ENCODE measurements at regions of chr2 and their contacts with region 1.

Region 1: DNA sequence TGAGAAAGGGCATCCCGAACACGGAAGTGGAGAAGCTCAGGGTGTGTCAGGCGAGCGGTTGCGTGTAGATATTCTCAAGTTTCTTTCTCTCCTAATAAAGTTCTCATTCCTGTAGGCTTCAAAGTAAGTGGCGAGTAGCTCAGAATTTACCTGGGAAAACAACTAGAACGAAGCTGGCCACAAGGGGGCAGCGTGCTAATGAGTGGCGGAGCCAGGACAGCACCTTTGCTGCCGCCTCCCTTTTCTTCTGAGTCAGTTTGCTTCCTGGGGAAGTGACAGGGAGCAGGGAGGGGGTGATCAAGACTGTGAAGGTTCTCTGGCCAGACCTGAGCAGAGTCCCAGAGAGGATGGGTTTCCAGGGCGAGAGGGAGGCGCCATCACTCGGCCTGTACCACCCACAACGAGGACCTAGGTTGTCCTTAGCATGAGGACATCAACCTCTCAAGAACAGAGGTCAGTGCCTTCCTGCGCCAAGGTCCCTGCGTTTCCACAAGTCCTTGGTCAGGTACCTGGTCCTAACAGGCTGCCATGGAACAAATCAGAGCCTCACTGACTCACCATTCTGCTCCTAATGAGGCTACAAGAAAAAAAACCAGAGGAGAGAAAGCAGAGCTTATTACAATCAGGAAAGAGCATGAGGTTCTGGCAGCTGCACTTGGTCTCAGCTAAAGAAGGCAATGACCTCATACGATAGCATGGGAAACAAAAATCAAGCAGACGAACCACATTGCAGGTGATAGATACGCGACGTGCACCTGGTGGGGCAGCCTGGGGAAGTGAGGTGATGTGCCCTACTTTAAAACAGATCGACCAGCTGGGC is 98.6 kb downstream of the PLB1 start:
- DNase-seq: peak; percentile 76 to 96
- H3K4me3 ChIP-seq: peak overlapping the region; percentile 15 to 18
- H3K27ac ChIP-seq: peak overlapping the region; percentile 89 to 93
- H3K4me1 ChIP-seq: peaks cover 0 to 39% of the 10 kb centered on the region in 2 donors
- H3K27me3 ChIP-seq: no peaks in the 10 kb centered on the region
- CTCF ChIP-seq: peak; percentile 77 to 89 (median 86)

Region 2: DNA sequence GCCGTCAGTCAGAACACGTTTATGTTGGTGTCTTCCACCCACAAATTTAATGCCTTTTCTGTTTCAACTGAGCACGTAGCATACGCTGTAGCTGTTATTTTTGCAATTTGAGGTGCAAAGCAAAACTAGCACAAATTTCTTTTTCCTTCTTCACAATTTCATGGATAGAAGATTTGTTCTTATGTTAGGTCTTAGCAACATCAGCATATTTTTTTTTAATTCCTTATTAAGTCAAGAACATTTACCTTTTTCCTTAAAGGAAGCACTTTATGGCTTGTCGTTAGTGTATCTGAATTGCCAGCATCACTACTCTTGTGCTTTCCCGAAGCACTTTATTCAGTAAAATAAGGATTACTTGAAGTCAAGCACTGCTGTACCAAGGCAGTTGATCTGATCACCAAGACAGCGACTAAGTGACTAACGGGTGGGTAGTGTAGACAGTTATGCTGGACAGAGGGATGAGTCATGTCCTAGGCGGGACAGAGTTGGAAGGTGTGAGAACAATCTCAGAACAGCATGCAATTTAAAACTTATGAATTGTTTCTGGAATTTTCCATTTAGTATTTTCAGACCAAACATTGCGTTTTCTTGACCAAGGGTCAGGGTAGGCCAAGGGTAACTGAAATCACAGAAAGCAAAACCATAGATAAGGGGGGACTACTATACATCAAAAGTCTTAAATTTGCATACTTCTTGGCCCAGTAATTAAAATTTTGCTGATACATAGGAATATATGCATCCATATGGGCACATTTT is 690.7 kb before region 1 on chr2:
- intact Hi-C with region 1: no loop called
- DNase-seq: no peak
- H3K4me3 ChIP-seq: no peak overlapping the region
- H3K27ac ChIP-seq: no peak overlapping the region
- H3K4me1 ChIP-seq: no peaks in the 10 kb centered on the region
- H3K27me3 ChIP-seq: no peaks in the 10 kb centered on the region
- CTCF ChIP-seq: no peak

Region 3: GRCh38 chr2:28566521-28567041 is 27.9 kb before region 1 on chr2:
- intact Hi-C with region 1: loop called (anchors 1 kb)
- DNase-seq: peak; percentile 44 to 90
- H3K4me3 ChIP-seq: peak overlapping the region; percentile 50 to 71
- H3K27ac ChIP-seq: peak overlapping the region; percentile 32 to 39
- H3K4me1 ChIP-seq: peaks cover 0 to 5% of the 10 kb centered on the region in 2 donors
- H3K27me3 ChIP-seq: no peaks in the 10 kb centered on the region
- CTCF ChIP-seq: peak; percentile 100

Region 4: DNA sequence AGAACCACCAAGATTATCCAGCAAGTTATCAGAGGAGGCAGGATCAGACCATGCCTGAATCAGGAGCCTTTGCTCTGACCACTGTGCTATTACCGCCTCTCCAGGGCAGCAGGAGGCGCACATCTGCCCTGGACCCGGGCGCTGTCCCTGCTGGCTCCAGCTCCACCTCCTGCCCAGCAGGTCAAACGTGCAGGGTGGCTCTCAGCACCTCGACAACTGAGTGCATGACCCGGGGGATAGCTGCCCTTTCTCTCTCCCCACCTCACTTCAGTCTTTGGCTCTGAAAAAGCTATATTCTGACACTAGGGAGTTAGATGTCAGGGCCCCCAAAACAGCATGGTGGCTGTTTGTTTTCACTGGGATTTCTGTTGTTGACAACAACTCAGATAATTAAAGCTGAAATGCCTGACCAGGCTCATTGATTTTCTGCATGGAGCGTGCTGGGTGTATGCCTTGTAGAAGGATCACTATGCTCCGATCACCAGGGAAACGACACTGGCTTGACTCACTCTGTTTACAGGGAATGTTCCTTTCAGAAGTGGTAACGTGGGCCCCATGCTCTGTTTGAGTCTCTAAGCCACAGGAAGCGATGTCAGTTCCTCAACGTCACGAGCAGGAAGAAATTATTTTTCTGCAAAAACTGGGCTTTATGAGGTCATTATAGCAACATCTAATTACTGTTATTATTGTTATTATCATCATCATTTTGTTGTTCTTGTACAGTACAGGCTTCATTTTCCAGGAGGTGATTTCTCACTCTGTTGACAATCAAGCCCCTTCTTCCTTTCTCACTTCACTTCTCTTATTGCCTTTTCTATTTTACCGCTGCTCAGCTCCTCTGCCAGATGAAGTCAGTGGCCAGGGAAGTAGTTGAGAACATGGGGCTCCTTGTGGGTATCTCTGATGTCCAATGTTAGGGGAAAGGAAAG is 26.9 kb after region 1 on chr2:
- intact Hi-C with region 1: loop called (anchors 1 kb)
- DNase-seq: peak; percentile 86 to 97
- H3K4me3 ChIP-seq: peak overlapping the region in 1 of 2 donors; percentile 8
- H3K27ac ChIP-seq: peak overlapping the region; percentile 94 to 100
- H3K4me1 ChIP-seq: peaks cover 34 to 65% of the 10 kb centered on the region in 2 donors
- H3K27me3 ChIP-seq: no peaks in the 10 kb centered on the region
- CTCF ChIP-seq: no peak

Region 5: GRCh38 chr2:28661589-28662001 is 67.1 kb after region 1 on chr2:
- intact Hi-C with region 1: loop called (anchors 1 kb)
- DNase-seq: peak; percentile 63 to 93
- H3K4me3 ChIP-seq: no peak overlapping the region
- H3K27ac ChIP-seq: peak overlapping the region; percentile 91 to 94
- H3K4me1 ChIP-seq: peaks cover 13 to 59% of the 10 kb centered on the region in 2 donors
- H3K27me3 ChIP-seq: no peaks in the 10 kb centered on the region
- CTCF ChIP-seq: no peak

Region 6: DNA sequence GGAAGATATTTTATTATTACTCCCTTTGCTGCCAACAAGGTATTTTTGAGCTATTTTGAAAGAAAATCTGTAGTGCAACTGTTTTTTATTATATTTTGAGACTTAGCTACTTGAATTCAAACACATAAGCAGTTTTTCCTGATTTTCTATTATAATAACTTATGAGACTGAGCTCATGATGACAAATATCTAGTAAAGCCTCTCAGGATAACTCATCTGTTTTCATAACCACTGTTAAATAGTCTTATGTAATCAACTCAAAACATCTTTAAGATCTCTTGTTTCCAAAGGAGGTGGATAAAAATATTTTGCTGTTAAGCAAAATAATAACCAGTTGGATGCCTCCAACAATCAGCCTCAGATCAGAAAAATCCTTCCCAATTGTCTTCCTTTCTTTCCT is 135.2 kb after region 1 on chr2:
- intact Hi-C with region 1: loop called (anchors 5 kb)
- DNase-seq: no peak
- H3K4me3 ChIP-seq: peak overlapping the region in 1 of 2 donors; percentile 27
- H3K27ac ChIP-seq: peak overlapping the region; percentile 41 to 48
- H3K4me1 ChIP-seq: peaks cover 4 to 29% of the 10 kb centered on the region in 2 donors
- H3K27me3 ChIP-seq: no peaks in the 10 kb centered on the region
- CTCF ChIP-seq: no peak

Measured in ascending aorta (tissue), 2 donors.